Sigmoid colon (tissue), 7 donors: ENCODE measurements at regions of chr3 and their contacts with region 1.

Region 1: DNA sequence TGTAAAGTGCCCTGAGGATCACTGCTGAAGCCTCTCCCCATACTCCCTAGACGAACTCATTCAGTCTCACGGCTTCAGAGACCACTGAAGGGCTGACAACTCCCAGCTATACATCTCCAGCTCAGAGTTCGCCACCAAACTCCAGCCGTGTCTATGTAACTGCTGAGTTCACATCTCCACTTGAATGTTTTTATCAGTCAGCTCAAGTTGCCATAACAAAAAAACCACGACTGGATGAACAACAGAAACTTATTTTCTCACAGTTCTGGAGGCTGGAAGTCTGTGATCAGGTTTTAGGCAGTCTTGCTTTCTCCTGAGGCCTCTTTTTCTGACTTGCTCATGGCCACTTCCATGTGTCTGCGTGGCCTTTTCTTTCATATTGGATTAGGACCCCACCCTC is 223.0 kb upstream of the LRRFIP2 start:
- DNase-seq: no peak
- H3K4me3 ChIP-seq: no peak overlapping the region
- H3K27ac ChIP-seq: peak overlapping the region in 3 of 4 donors; percentile 50 to 78 (median 53)
- H3K4me1 ChIP-seq: peaks cover 0 to 20% (median 4%) of the 10 kb centered on the region in 4 donors
- H3K27me3 ChIP-seq: no peaks in the 10 kb centered on the region
- CTCF ChIP-seq: no peak
- EP300 ChIP-seq: no peak
- POLR2A ChIP-seq: no peak

Region 2: GRCh38 chr3:36918050-36918449 is 479.3 kb before region 1 on chr3:
- intact Hi-C with region 1: no loop called
- DNase-seq: no peak
- H3K4me3 ChIP-seq: no peak overlapping the region
- H3K27ac ChIP-seq: no peak overlapping the region
- H3K4me1 ChIP-seq: no peaks in the 10 kb centered on the region
- H3K27me3 ChIP-seq: no peaks in the 10 kb centered on the region
- CTCF ChIP-seq: no peak
- EP300 ChIP-seq: no peak
- POLR2A ChIP-seq: no peak

Region 3: GRCh38 chr3:37367436-37367835 is 30.0 kb before region 1 on chr3:
- intact Hi-C with region 1: no loop called
- DNase-seq: no peak
- H3K4me3 ChIP-seq: no peak overlapping the region
- H3K27ac ChIP-seq: no peak overlapping the region
- H3K4me1 ChIP-seq: no peaks in the 10 kb centered on the region
- H3K27me3 ChIP-seq: no peaks in the 10 kb centered on the region
- CTCF ChIP-seq: no peak
- EP300 ChIP-seq: no peak
- POLR2A ChIP-seq: no peak

Region 4: GRCh38 chr3:37443363-37444035 is 46.1 kb after region 1 on chr3:
- intact Hi-C with region 1: loop called (anchors 10 kb)
- DNase-seq: no peak
- H3K4me3 ChIP-seq: no peak overlapping the region
- H3K27ac ChIP-seq: no peak overlapping the region
- H3K4me1 ChIP-seq: peaks cover 0 to 20% (median 14%) of the 10 kb centered on the region in 4 donors
- H3K27me3 ChIP-seq: no peaks in the 10 kb centered on the region
- CTCF ChIP-seq: no peak
- EP300 ChIP-seq: no peak
- POLR2A ChIP-seq: no peak

Region 5: GRCh38 chr3:37519661-37520060 is 122.3 kb after region 1 on chr3:
- intact Hi-C with region 1: no loop called
- DNase-seq: no peak
- H3K4me3 ChIP-seq: no peak overlapping the region
- H3K27ac ChIP-seq: no peak overlapping the region
- H3K4me1 ChIP-seq: no peaks in the 10 kb centered on the region
- H3K27me3 ChIP-seq: no peaks in the 10 kb centered on the region
- CTCF ChIP-seq: no peak
- EP300 ChIP-seq: no peak
- POLR2A ChIP-seq: no peak